K562 (cell line): ENCODE measurements at regions of chr11 and their contacts with region 1.

Region 1: GRCh38 chr11:78000193-78000592 is 5.7 kb upstream of the INTS4 start:
- DNase-seq: peak; percentile 62 to 81 (median 66)
- ATAC-seq: peak; percentile 92
- H3K4me3 ChIP-seq: no peak overlapping the region
- H3K27ac ChIP-seq: no peak overlapping the region
- H3K4me1 ChIP-seq: peaks cover 2 to 4% of the 10 kb centered on the region in 2 experiments; a peak in 3 of 5 replicates
- H3K27me3 ChIP-seq: no peaks in the 10 kb centered on the region
- CTCF ChIP-seq: peak; percentile 73 to 80 (median 76)
- EP300 ChIP-seq: no peak
- POLR2A ChIP-seq: no peak
- RAD21 ChIP-seq: peak; percentile 46 to 71

Region 2: DNA sequence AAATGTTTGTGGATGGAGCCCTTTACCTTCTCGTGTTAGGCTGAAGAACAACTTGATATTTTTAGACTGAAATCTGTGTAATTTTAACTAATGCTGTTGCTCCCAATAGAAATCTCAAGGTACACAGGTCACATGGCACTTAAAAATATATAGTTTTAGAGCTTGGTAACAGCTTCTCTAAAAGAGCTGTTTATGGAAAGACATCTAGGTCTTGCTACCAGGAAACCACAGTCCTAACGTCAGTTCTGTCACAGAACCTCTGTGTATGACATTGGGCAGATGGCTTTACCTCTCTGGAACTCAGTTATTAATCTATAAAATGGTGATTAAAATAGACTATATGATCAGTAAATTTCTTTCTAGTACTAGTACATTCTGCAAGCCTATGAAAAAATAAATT is 561.7 kb before region 1 on chr11:
- CTCF ChIA-PET with region 1: no interaction called
- POLR2A ChIA-PET with region 1: no interaction called
- in situ Hi-C with region 1: no loop called
- intact Hi-C with region 1: no loop called
- DNase-seq: no peak
- ATAC-seq: no peak
- H3K4me3 ChIP-seq: no peak overlapping the region
- H3K27ac ChIP-seq: no peak overlapping the region
- H3K4me1 ChIP-seq: no peaks in the 10 kb centered on the region; a peak in 1 of 5 replicates
- H3K27me3 ChIP-seq: peaks cover 0 to 4% of the 10 kb centered on the region in 2 experiments; a peak in 2 of 5 replicates
- CTCF ChIP-seq: no peak
- EP300 ChIP-seq: no peak
- POLR2A ChIP-seq: no peak
- RAD21 ChIP-seq: no peak

Region 3: DNA sequence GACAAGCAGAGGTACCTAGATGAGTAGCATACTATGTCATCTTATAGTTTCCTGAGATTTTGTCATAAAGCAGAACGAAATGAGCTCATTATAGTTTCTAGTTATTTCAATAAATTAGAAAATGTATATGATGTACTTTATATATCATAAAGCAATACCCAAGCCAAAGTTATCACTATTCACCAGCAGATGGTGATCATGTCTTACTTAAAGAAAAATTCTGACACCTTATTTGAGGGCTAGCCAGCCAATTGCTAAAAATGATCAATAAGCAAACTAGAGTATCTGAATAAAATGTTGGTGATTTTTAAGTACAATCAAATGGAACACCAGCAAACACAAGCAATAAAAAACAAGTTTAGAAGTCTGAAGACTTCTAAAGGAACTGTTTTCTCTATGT is 223.7 kb before region 1 on chr11:
- CTCF ChIA-PET with region 1: no interaction called
- POLR2A ChIA-PET with region 1: no interaction called
- in situ Hi-C with region 1: no loop called
- intact Hi-C with region 1: loop called (anchors 1 kb)
- DNase-seq: peak in 2 of 4 experiments; percentile 21 to 27
- ATAC-seq: peak; percentile 56; the same call in 2 of the 3 replicates
- H3K4me3 ChIP-seq: no peak overlapping the region
- H3K27ac ChIP-seq: no peak overlapping the region
- H3K4me1 ChIP-seq: peaks cover 0 to 3% of the 10 kb centered on the region in 2 experiments; a peak in 1 of 5 replicates
- H3K27me3 ChIP-seq: no peaks in the 10 kb centered on the region
- CTCF ChIP-seq: peak in 2 of 3 experiments; percentile 27 to 50; a peak in 3 of 6 replicates
- EP300 ChIP-seq: no peak
- POLR2A ChIP-seq: no peak
- RAD21 ChIP-seq: peak; percentile 24 to 62

Region 4: GRCh38 chr11:77879218-77879617 is 121.0 kb before region 1 on chr11:
- CTCF ChIA-PET with region 1: no interaction called
- POLR2A ChIA-PET with region 1: no interaction called
- in situ Hi-C with region 1: no loop called
- intact Hi-C with region 1: no loop called
- DNase-seq: peak in 1 of 4 experiments; percentile 12
- ATAC-seq: peak; percentile 60
- H3K4me3 ChIP-seq: no peak overlapping the region
- H3K27ac ChIP-seq: no peak overlapping the region
- H3K4me1 ChIP-seq: peaks cover 0 to 2% of the 10 kb centered on the region in 2 experiments; a peak in 2 of 5 replicates
- H3K27me3 ChIP-seq: no peaks in the 10 kb centered on the region
- CTCF ChIP-seq: no peak
- EP300 ChIP-seq: no peak
- POLR2A ChIP-seq: no peak
- RAD21 ChIP-seq: no peak

Region 5: GRCh38 chr11:78019821-78020220 is 19.6 kb after region 1 on chr11:
- CTCF ChIA-PET with region 1: no interaction called
- POLR2A ChIA-PET with region 1: interaction called, 11 read pairs
- in situ Hi-C with region 1: no loop called
- intact Hi-C with region 1: no loop called
- DNase-seq: no peak
- ATAC-seq: no peak
- H3K4me3 ChIP-seq: no peak overlapping the region
- H3K27ac ChIP-seq: no peak overlapping the region
- H3K4me1 ChIP-seq: peaks cover 8 to 10% of the 10 kb centered on the region in 2 experiments; a peak in 4 of 5 replicates
- H3K27me3 ChIP-seq: no peaks in the 10 kb centered on the region
- CTCF ChIP-seq: no peak
- EP300 ChIP-seq: no peak
- POLR2A ChIP-seq: no peak
- RAD21 ChIP-seq: no peak